H1 (cell line): ENCODE measurements at regions of chr1 and their contacts with region 1.

Region 1: GRCh38 chr1:11134251-11134897 is 34.7 kb upstream of the EXOSC10 start:
- DNase-seq: no peak
- H3K4me3 ChIP-seq: no peak overlapping the region
- H3K27ac ChIP-seq: no peak overlapping the region
- H3K4me1 ChIP-seq: no peaks in the 10 kb centered on the region
- H3K27me3 ChIP-seq: no peaks in the 10 kb centered on the region
- CTCF ChIP-seq: no peak
- EP300 ChIP-seq: no peak
- POLR2A ChIP-seq: no peak
- RAD21 ChIP-seq: no peak

Region 2: GRCh38 chr1:11031624-11032262 is 102.6 kb before region 1 on chr1:
- CTCF ChIA-PET with region 1: no interaction called
- POLR2A ChIA-PET with region 1: no interaction called
- DNase-seq: peak in 1 of 2 experiments; percentile 40
- H3K4me3 ChIP-seq: no peak overlapping the region
- H3K27ac ChIP-seq: no peak overlapping the region
- H3K4me1 ChIP-seq: peaks cover 0 to 4% (median 0%) of the 10 kb centered on the region in 4 experiments; a peak in 2 of 7 replicates
- H3K27me3 ChIP-seq: no peaks in the 10 kb centered on the region
- CTCF ChIP-seq: no peak
- EP300 ChIP-seq: no peak
- POLR2A ChIP-seq: no peak
- RAD21 ChIP-seq: no peak

Region 3: GRCh38 chr1:11144570-11145256 is 10.3 kb after region 1 on chr1:
- CTCF ChIA-PET with region 1: interaction called, 10 read pairs
- POLR2A ChIA-PET with region 1: interaction called, 5 read pairs
- DNase-seq: no peak
- H3K4me3 ChIP-seq: no peak overlapping the region
- H3K27ac ChIP-seq: no peak overlapping the region
- H3K4me1 ChIP-seq: no peaks in the 10 kb centered on the region
- H3K27me3 ChIP-seq: no peaks in the 10 kb centered on the region
- CTCF ChIP-seq: no peak
- EP300 ChIP-seq: no peak
- POLR2A ChIP-seq: no peak
- RAD21 ChIP-seq: no peak